ENCODE measurements at regions of chr7 and their contacts with region 1.

Region 1: DNA sequence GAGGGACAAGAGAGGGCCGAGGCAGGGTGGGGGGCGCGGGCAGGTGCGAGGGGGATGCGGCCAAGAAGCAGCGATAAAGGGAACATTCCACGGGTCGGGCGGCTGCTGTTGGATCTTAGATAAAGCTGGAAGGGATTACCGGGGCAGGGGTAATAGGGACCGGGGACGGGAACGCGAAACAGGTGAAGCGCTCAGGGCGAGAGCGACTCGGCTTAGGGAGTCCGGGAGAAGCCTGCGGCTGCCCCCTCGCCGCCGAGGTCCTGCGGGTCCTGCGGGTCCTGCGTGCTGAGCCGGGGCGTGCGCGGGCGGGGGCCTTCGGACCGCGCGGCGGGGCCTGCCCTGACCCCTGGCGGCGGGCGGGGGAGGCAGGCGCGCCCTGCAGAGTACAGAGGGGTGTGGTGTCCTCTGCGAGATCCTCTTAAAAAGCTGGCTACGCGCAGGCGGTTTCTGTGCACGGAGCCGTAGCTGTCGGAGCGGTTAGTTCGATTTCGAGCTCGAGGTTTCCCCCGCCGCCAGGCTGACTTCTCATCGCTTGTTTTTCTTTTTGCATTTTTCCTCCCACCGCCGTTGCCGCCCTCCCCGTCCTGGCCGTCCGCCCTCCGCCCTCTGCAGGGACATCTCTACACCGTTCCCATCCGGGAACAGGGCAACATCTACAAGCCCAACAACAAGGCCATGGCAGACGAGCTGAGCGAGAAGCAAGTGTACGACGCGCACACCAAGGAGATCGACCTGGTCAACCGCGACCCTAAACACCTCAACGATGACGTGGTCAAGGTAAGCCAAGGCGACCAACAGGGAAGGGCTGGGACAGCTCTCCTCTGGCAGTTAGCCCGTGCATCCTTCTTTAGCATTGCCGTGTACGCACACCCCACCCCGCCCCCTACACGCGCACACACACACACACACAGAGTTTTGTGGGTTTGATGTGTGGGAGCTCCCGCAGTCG is 1.4 kb downstream of the CAV1 start:
- DNase-seq: peak; percentile 64
- H3K4me3 ChIP-seq: peak overlapping the region; percentile 97
- H3K27ac ChIP-seq: peak overlapping the region; percentile 98
- H3K27me3 ChIP-seq: no peaks in the 10 kb centered on the region
- CTCF ChIP-seq: peak; percentile 51

Region 2: DNA sequence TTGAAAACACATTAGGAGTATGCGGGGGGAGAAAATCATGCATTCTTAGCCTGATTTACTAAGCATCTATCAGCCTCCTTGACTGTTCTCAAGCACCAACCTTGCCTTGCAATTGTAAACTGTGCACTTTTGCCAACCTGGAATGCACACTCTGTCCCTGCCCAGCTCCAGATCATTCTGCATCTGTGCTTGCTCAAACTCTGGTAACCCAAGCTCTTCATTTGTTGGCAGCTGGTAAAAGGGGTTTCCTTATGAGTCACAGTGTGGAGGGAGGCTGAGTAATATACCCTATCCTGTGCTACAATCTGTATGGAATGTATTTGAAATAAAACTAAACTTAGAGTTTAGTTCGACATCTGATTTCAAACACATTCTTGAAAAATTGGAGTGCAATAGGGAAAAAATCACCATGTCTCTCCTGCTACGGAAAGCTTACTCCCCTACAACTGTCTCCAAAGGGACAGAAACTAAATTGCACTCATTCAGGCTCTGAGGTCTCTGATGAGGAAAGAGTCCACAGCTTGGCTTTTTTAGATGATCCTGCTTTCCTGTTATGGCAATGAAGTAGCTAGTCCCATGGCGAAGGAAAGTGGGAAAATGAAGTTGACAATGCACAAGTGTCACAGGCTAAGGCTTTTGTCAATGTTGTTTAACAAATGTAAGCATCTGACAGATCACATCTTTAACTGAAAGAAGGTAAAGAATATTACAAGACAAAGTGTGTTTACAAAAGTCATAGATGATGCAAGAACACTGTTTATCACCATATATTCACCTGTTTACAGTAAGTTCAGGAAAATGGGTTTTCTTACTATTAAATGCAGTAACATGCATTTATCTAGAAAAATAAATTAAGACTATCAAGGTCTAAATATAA is 254.0 kb before region 1 on chr7:
- CTCF ChIA-PET with region 1: interaction called, 8 read pairs
- POLR2A ChIA-PET with region 1: interaction called, 14 read pairs
- DNase-seq: peak; percentile 93
- H3K4me3 ChIP-seq: peak overlapping the region; percentile 7; the same call in 1 of the 2 replicates
- H3K27ac ChIP-seq: peak overlapping the region; percentile 79
- H3K27me3 ChIP-seq: no peaks in the 10 kb centered on the region
- CTCF ChIP-seq: no peak

Region 3: GRCh38 chr7:116543664-116544063 is 17.5 kb after region 1 on chr7:
- CTCF ChIA-PET with region 1: interaction called, 13 read pairs
- POLR2A ChIA-PET with region 1: interaction called, 8 read pairs
- DNase-seq: no peak
- H3K4me3 ChIP-seq: no peak overlapping the region
- H3K27ac ChIP-seq: no peak overlapping the region
- H3K27me3 ChIP-seq: no peaks in the 10 kb centered on the region
- CTCF ChIP-seq: no peak

Region 4: GRCh38 chr7:116576350-116577319 is 50.4 kb after region 1 on chr7:
- CTCF ChIA-PET with region 1: interaction called, 7 read pairs
- POLR2A ChIA-PET with region 1: interaction called, 18 read pairs
- DNase-seq: peak; percentile 89
- H3K4me3 ChIP-seq: no peak overlapping the region; the same call in 1 of the 2 replicates
- H3K27ac ChIP-seq: peak overlapping the region; percentile 87
- H3K27me3 ChIP-seq: no peaks in the 10 kb centered on the region
- CTCF ChIP-seq: 0 out of 2 replicates have a peak, but pooled peaks have one; percentile 4

Region 5: DNA sequence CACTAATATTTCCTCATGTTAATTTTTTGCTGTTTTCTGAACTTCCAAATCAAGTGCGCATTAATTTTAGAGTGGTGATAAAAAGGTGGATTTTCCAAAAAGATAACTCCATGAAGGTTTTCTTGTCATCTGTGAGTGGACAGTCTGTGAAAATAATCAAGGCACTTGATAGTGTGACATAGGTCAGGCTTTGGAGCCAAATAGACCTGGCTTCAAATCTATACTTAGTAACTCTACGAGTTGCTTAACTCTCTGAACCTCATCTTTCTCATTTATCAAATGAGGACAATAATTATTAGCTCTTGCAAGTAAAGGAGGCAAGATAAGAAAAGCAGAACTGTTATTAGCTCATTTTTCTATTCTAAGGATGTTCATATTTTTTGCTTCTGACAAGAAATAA is 121.1 kb after region 1 on chr7:
- CTCF ChIA-PET with region 1: no interaction called
- POLR2A ChIA-PET with region 1: no interaction called
- DNase-seq: no peak
- H3K4me3 ChIP-seq: no peak overlapping the region
- H3K27ac ChIP-seq: no peak overlapping the region
- H3K27me3 ChIP-seq: no peaks in the 10 kb centered on the region
- CTCF ChIP-seq: no peak

Region 6: DNA sequence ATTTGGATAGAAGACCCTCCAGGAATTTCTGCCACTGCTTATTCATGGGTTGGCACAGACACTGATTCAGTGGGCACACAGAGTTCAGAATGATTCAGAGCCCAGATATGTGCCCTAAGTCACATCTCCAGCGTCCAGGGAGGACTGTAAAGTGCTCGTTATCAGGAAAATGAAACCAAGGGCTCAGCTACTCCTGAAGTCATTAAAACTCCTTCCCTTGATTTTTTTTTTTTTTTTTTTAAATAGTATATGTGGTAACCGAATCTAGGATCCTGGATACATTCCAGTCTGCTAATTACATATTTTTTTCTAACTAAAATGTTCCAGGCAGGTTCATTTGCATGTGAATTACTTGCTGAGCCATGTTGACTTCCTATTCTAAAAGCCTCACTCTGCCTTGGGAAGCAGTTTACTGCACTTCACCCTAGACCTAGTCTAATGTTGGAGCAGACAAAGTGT is 180.5 kb after region 1 on chr7:
- CTCF ChIA-PET with region 1: no interaction called
- POLR2A ChIA-PET with region 1: no interaction called
- DNase-seq: no peak
- H3K4me3 ChIP-seq: peak overlapping the region; percentile 17
- H3K27ac ChIP-seq: no peak overlapping the region
- H3K27me3 ChIP-seq: no peaks in the 10 kb centered on the region
- CTCF ChIP-seq: no peak

Measured in AG04450 (cell line).